Upper lobe of right lung (tissue), 1 donor: ENCODE measurements at regions of chr19 and their contacts with region 1.

Region 1: GRCh38 chr19:45492627-45493470 is 4.0 kb downstream of the RTN2 start:
- DNase-seq: peak; percentile 72
- ATAC-seq: peak; percentile 25
- H3K4me3 ChIP-seq: peak overlapping the region; percentile 60
- H3K27ac ChIP-seq: peak overlapping the region; percentile 2
- H3K4me1 ChIP-seq: peaks cover 18% of the 10 kb centered on the region
- H3K27me3 ChIP-seq: no peaks in the 10 kb centered on the region
- CTCF ChIP-seq: no peak

Region 2: DNA sequence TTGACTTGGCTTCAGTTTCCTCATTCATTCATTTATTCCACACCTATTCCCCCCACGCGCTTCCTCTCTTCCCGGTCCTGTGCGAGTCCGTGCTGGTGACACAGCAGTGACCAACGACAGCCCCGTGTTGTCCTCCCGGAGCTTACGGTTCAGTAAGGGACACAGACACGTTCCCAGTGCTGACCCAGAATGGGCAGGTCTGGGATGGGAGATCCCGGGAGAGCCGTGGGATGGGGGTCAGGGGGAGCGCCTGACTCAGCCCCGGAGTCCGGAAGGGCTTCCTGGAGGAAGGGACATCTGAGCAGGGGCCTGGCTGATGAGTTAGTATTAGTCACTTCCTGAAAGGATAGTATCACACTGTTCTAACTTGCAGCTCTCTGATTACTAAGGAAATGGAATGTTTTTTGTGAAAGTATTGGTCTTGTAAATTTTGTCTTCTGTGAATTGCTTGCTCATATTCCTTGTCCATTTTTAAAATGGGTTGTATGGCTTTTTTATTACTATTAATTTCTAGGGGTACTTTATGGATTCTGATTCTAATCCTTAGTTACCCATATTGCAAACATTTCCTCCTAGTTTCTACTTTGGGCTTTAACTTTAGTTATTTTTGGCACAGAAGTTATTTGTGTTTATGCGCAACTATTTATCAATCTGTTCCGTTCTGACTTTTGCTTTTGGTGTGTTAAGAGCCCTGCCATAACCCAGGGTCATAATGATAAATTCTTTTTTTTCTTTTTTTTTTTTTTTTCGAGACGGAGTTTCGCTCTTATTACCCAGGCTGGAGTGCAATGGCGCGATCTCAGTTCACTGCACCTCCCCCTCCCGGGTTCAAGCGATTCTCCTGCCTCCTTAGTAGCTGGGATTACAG is 68.4 kb before region 1 on chr19:
- intact Hi-C with region 1: loop called (anchors 5 kb)
- DNase-seq: peak; percentile 82
- ATAC-seq: peak; percentile 58
- H3K4me3 ChIP-seq: peak overlapping the region; percentile 67
- H3K27ac ChIP-seq: peak overlapping the region; percentile 94
- H3K4me1 ChIP-seq: peaks cover 25% of the 10 kb centered on the region
- H3K27me3 ChIP-seq: no peaks in the 10 kb centered on the region
- CTCF ChIP-seq: no peak

Region 3: GRCh38 chr19:45657520-45658167 is 164.8 kb after region 1 on chr19:
- intact Hi-C with region 1: no loop called
- DNase-seq: no peak
- ATAC-seq: no peak
- H3K4me3 ChIP-seq: no peak overlapping the region
- H3K27ac ChIP-seq: no peak overlapping the region
- H3K4me1 ChIP-seq: no peaks in the 10 kb centered on the region
- H3K27me3 ChIP-seq: no peaks in the 10 kb centered on the region
- CTCF ChIP-seq: no peak